BJ (cell line): ENCODE measurements at regions of chr22 and their contacts with region 1.

Region 1: GRCh38 chr22:22959147-22959827 is 71.7 kb downstream of the IGLL5 start:
- DNase-seq: no peak
- H3K4me3 ChIP-seq: no peak overlapping the region
- H3K27me3 ChIP-seq: peaks cover 3% of the 10 kb centered on the region
- CTCF ChIP-seq: peak; percentile 74

Region 2: GRCh38 chr22:22380098-22381030 is 578.9 kb before region 1 on chr22:
- CTCF ChIA-PET with region 1: no interaction called
- POLR2A ChIA-PET with region 1: no interaction called
- DNase-seq: no peak
- H3K4me3 ChIP-seq: no peak overlapping the region
- H3K27me3 ChIP-seq: no peaks in the 10 kb centered on the region; the same call in none of the 2 replicates
- CTCF ChIP-seq: no peak

Region 3: DNA sequence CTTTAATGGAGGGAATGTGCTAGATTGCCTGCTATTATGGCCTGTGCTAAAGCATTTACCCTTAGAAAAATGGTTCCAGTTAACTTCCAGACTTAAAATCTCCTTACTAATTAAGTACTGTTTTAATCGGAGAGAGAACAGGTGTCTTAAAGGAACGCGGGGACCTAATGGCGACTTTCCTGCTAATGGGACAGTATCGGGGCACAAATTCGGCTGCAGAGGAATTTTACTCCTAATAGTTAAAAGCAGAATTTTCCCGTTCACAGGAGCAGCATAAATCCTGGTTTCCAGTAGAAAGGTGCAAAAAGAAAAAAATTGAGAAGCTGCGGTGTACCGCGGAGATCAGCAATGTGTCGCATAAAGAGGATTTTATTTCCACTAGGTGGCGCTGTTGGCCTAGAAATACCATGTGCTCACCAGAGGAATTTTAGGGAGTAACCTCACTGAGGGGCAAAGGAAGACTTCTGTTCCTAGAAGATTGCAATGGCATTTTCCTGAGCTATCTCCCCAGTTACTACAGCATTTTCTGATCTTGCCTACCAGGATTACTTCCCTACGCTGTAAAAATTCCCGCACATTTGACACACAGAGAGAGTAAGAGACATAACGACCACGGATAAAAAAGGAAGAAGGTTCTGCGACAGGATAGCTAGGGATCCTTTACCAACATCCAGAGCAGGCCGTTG is 495.3 kb before region 1 on chr22:
- CTCF ChIA-PET with region 1: interaction called, 50 read pairs
- POLR2A ChIA-PET with region 1: no interaction called
- DNase-seq: no peak
- H3K4me3 ChIP-seq: no peak overlapping the region
- H3K27me3 ChIP-seq: no peaks in the 10 kb centered on the region; the same call in 1 of the 2 replicates
- CTCF ChIP-seq: peak; percentile 59

Region 4: DNA sequence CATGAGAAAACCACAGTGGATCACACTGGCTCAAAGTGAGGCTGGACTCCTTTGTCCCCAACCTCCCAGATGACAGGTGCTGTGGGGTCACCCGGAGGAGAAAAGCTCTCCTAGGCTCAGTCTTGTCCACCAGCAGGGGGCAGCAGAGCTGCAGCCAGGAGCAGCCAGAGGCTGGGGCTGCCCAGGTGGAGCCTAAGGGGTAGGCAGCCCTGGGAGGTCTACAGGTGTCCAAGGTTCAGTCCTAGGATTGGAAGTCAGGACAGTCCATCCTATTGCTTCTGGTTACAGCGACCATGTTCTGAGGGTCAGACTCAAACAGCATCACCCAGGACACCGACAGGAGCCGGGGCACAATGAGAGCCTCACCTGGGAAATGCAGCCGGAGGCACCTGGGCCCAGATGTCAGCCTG is 149.3 kb before region 1 on chr22:
- CTCF ChIA-PET with region 1: interaction called, 11 read pairs
- POLR2A ChIA-PET with region 1: no interaction called
- DNase-seq: no peak
- H3K4me3 ChIP-seq: no peak overlapping the region
- H3K27me3 ChIP-seq: no peaks in the 10 kb centered on the region
- CTCF ChIP-seq: peak; percentile 68

Region 5: GRCh38 chr22:22855617-22856308 is 103.5 kb before region 1 on chr22:
- CTCF ChIA-PET with region 1: interaction called, 231 read pairs
- POLR2A ChIA-PET with region 1: no interaction called
- DNase-seq: no peak
- H3K4me3 ChIP-seq: no peak overlapping the region
- H3K27me3 ChIP-seq: peaks cover 7% of the 10 kb centered on the region
- CTCF ChIP-seq: peak; percentile 48

Region 6: DNA sequence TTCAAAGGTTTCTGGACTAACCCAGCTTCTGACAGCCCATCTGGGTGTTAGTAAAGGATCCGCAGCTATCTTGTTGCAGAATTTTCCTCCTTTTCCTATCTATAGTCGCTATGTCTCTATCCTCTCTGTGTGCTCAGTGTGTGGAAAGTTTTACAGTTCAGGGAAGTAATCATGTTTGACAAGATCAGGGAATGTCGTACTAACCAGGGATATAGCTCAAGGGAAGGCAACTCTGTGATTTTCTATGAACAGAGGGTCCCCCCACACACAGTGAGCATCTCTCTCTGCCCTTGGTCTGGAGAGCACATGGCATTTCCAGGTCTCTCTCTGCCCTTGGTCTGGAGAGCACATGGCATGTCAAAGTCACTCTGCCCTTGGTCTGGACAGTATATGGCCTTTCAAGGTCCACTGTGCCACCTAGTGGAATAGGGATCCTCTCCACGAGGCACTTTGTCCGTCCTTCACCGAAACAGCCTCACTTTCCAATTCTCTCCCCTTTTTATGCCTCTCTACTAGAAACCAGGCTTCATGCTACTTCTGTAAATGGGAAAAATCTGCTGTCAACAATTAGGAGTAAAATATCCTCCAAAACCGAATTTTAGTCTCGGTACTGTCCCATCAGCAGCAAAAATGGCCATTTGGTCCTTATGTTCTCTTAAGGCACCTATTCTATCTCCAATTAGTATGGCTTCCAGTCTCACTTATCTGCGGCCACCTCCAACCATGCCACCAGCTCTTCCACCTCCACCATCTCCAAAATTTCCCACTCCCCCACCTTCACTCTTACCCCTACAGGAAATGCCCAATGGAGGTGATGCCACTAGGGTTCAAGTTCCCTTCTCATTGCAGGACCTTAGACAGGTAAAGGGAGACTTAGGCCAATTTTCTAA is 17.0 kb after region 1 on chr22:
- CTCF ChIA-PET with region 1: interaction called, 26 read pairs
- POLR2A ChIA-PET with region 1: no interaction called
- DNase-seq: no peak
- H3K4me3 ChIP-seq: no peak overlapping the region
- H3K27me3 ChIP-seq: no peaks in the 10 kb centered on the region
- CTCF ChIP-seq: no peak

Region 7: GRCh38 chr22:23077627-23078461 is 118.6 kb after region 1 on chr22:
- CTCF ChIA-PET with region 1: no interaction called
- POLR2A ChIA-PET with region 1: no interaction called
- DNase-seq: no peak
- H3K4me3 ChIP-seq: no peak overlapping the region
- H3K27me3 ChIP-seq: no peaks in the 10 kb centered on the region
- CTCF ChIP-seq: no peak

Region 8: GRCh38 chr22:23128269-23129108 is 169.2 kb after region 1 on chr22:
- CTCF ChIA-PET with region 1: interaction called, 425 read pairs
- POLR2A ChIA-PET with region 1: no interaction called
- DNase-seq: peak; percentile 26
- H3K4me3 ChIP-seq: no peak overlapping the region
- H3K27me3 ChIP-seq: 0 out of 2 replicates have a peak, but pooled peaks cover 2% of the 10 kb centered on the region
- CTCF ChIP-seq: peak; percentile 76

Region 9: DNA sequence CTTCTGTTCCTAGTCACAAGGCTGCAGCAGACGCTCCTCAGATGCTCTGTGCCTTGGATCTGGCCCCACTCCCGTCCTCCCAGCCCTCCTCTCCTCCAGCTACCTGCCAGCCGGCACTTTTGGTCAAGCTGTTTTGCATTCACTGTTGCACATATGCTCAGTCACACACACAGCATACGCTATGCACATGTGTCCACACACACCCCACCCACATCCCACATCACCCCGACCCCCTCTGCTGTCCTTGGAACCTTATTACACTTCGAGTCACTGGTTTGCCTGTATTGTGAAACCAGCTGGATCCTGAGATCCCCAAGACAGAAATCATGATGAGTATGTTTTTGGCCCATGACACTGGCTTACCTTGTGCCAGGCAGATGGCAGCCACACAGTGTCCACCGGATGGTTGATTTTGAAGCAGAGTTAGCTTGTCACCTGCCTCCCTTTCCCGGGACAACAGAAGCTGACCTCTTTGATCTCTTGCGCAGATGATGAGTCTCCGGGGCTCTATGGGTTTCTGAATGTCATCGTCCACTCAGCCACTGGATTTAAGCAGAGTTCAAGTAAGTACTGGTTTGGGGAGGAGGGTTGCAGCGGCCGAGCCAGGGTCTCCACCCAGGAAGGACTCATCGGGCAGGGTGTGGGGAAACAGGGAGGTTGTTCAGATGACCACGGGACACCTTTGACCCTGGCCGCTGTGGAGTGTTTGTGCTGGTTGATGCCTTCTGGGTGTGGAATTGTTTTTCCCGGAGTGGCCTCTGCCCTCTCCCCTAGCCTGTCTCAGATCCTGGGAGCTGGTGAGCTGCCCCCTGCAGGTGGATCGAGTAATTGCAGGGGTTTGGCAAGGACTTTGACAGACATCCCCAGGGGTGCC is 330.8 kb after region 1 on chr22:
- CTCF ChIA-PET with region 1: interaction called, 10 read pairs
- POLR2A ChIA-PET with region 1: no interaction called
- DNase-seq: no peak
- H3K4me3 ChIP-seq: no peak overlapping the region
- H3K27me3 ChIP-seq: no peaks in the 10 kb centered on the region
- CTCF ChIP-seq: peak; percentile 92

Region 10: GRCh38 chr22:23431337-23432072 is 472.2 kb after region 1 on chr22:
- CTCF ChIA-PET with region 1: no interaction called
- POLR2A ChIA-PET with region 1: no interaction called
- DNase-seq: no peak
- H3K4me3 ChIP-seq: no peak overlapping the region
- H3K27me3 ChIP-seq: no peaks in the 10 kb centered on the region
- CTCF ChIP-seq: no peak